Activated naive CD4-positive, alpha-beta T cell treated with anti-CD3 and anti-CD28 coated beads for 36 hours (primary cell): ENCODE measurements at regions of chr6 and their contacts with region 1.

Region 1: GRCh38 chr6:130513770-130514169 is 148.0 kb downstream of the TMEM200A start:
- DNase-seq: peak; percentile 77
- H3K4me3 Mint-ChIP-seq: no peak overlapping the region
- H3K27ac Mint-ChIP-seq: peak overlapping the region; percentile 78
- H3K4me1 Mint-ChIP-seq: peaks cover 66% of the 10 kb centered on the region
- H3K27me3 Mint-ChIP-seq: no peaks in the 10 kb centered on the region

Region 2: GRCh38 chr6:129490521-129491245 is 1023.1 kb before region 1 on chr6:
- CTCF ChIA-PET with region 1: no interaction called
- intact Hi-C with region 1: loop called (anchors 1 kb)
- DNase-seq: peak; percentile 79
- H3K4me3 Mint-ChIP-seq: peak overlapping the region; percentile 67
- H3K27ac Mint-ChIP-seq: peak overlapping the region; percentile 100
- H3K4me1 Mint-ChIP-seq: peaks cover 70% of the 10 kb centered on the region
- H3K27me3 Mint-ChIP-seq: no peaks in the 10 kb centered on the region

Region 3: GRCh38 chr6:130138116-130138908 is 375.5 kb before region 1 on chr6:
- CTCF ChIA-PET with region 1: no interaction called
- intact Hi-C with region 1: loop called (anchors 5 kb)
- DNase-seq: peak; percentile 27
- H3K4me3 Mint-ChIP-seq: peak overlapping the region; percentile 55
- H3K27ac Mint-ChIP-seq: peak overlapping the region; percentile 84
- H3K4me1 Mint-ChIP-seq: peaks cover 57% of the 10 kb centered on the region
- H3K27me3 Mint-ChIP-seq: no peaks in the 10 kb centered on the region

Region 4: GRCh38 chr6:130575971-130576370 is 62.2 kb after region 1 on chr6:
- CTCF ChIA-PET with region 1: no interaction called
- intact Hi-C with region 1: loop called (anchors 1 kb)
- DNase-seq: peak; percentile 75
- H3K4me3 Mint-ChIP-seq: peak overlapping the region; percentile 39
- H3K27ac Mint-ChIP-seq: peak overlapping the region; percentile 36
- H3K4me1 Mint-ChIP-seq: peaks cover 36% of the 10 kb centered on the region
- H3K27me3 Mint-ChIP-seq: no peaks in the 10 kb centered on the region

Region 5: GRCh38 chr6:130620338-130620781 is 106.6 kb after region 1 on chr6:
- CTCF ChIA-PET with region 1: no interaction called
- intact Hi-C with region 1: loop called (anchors 2 kb)
- DNase-seq: no peak
- H3K4me3 Mint-ChIP-seq: no peak overlapping the region
- H3K27ac Mint-ChIP-seq: no peak overlapping the region
- H3K4me1 Mint-ChIP-seq: peaks cover 14% of the 10 kb centered on the region
- H3K27me3 Mint-ChIP-seq: no peaks in the 10 kb centered on the region

Region 6: DNA sequence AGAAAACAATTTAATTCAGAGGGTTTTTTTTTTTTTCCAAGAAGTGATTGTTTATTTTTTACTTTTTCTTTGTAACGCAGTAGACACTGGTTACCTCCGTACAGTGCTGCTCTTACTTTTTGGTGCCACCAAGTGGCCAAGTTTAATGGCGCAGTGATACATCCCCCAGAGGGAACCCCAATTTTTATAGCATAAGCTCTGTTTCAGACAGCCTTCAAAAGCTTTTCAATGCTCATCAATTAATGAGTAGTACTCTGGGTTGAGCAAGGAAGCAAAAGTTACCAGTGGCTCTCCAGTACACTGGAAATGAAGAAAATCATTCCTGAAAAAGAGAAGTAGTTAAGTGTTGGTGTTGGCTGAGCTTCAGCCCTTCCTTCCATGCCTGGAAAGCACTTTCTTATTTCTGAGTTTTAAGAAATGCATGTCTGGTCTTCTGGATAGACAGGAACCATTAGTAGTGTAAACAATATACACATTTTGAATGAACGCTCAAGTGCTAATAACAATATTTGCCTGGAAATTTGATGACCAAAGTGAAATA is 184.3 kb after region 1 on chr6:
- CTCF ChIA-PET with region 1: no interaction called
- intact Hi-C with region 1: loop called (anchors 5 kb)
- DNase-seq: peak; percentile 79
- H3K4me3 Mint-ChIP-seq: no peak overlapping the region
- H3K27ac Mint-ChIP-seq: no peak overlapping the region
- H3K4me1 Mint-ChIP-seq: peaks cover 19% of the 10 kb centered on the region
- H3K27me3 Mint-ChIP-seq: no peaks in the 10 kb centered on the region